Activated naive CD4-positive, alpha-beta T cell treated with anti-CD3 and anti-CD28 coated beads for 36 hours (primary cell): ENCODE measurements at regions of chr12 and their contacts with region 1.

Region 1: DNA sequence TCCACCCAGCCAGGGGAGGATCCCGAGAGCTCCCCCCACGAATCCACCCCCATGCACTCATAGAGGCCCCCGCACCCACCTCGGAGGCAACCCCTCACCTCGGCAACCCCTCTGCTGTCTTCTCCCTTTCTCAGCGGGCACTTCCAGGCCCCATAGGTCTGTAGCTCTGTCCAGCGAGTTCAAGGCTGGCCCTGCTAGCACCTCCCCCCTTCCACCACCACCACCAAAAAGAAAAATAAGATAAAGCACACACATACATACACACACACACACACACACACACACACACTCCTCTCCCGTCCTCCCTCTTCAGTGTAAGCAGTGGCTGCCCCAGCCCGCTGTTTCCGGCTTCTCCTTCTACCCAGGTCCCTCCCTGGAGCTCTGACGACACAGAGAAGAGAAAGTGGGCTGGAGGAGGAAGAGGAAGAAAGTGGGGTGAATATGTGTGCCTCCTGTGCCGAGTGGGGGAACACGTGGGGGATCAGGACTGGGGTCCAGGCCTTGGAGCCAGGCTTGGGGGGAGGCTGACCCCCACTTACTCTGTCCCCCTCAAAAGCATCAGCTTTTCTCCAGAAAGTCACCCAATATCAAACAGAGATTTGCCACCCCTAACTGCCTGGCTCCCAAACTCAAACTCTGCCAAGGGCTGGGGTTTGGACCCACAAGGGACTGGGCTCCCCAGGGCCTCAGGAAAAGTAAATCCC is at the start of gene STAT6:
- DNase-seq: peak; percentile 92
- H3K4me3 Mint-ChIP-seq: peak within 1 kb of the TSS; percentile 92
- H3K27ac Mint-ChIP-seq: peak within 1 kb of the TSS; percentile 94
- H3K4me1 Mint-ChIP-seq: peaks cover 45% of the 10 kb centered on the region
- H3K27me3 Mint-ChIP-seq: no peaks in the 10 kb centered on the region
- total RNA-seq, gene STAT6: 188 to 193 TPM

Region 2: DNA sequence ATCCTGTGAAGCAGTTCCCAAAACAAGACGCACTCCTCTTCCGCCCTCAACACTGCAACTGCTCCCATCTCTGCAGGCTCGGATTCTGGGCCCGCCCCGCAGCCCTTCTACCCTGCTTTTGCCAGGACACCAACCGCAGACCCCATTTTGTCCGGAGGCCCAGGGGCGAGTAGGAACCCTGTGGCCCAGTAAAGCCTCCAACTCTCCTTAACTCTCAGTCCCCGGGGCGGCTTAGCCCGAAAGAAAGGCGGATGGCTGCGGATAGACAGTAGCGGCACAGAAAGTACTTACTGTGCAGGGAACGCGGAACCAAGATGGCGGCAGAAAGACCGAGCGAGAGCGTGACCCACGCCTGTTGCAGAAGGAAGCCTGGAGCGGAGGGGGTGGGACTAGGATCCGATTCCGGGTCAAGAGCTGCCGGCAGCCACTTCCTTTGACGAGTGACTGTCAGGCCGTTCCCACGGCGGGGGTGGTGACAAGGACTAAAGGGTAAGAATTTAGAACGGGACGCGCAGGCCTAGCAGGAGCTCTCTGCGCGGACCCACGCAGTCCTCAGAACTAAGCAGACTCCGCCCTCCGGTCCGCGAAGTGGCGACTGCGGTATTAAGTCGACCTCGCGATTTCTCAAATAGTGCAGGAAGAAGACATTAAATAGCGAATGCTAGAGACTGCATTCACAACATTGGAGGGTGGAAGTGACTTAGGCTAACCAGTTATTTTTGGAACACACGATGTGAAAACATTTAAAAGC is 386.0 kb before region 1 on chr12 and contains the start of gene NACA:
- CTCF ChIA-PET with region 1: no interaction called
- intact Hi-C with region 1: loop called (anchors 1 kb)
- DNase-seq: peak; percentile 99
- H3K4me3 Mint-ChIP-seq: peak within 1 kb of the TSS; percentile 99
- H3K27ac Mint-ChIP-seq: peak within 1 kb of the TSS; percentile 99
- H3K4me1 Mint-ChIP-seq: peaks cover 46% of the 10 kb centered on the region
- H3K27me3 Mint-ChIP-seq: no peaks in the 10 kb centered on the region
- total RNA-seq, gene NACA: 1,279 to 1,321 TPM

Region 3: DNA sequence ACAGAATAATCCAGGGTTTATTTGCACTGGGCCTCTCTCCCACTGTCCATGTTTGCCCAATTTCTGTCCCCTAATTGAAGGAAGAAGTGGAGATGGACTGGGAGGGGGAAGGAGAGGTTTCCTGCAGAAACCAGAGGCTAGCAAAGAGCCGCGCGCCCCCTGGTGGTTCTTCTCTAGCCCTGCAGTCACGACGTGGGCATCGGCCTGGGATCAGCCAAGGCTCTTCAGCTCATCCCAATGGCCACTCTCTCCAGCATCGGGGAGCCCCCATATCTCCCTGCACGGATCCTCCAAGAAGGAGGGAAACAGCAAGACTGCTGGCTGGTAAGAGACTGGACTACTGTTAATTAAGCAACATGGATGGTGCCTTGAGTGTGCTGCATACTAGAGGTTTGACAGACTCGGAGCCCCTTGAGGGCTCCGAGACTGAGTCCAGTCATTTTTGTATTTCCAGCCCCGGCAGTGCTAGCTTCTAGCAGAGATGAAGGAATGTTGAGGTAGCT is 123.6 kb before region 1 on chr12:
- CTCF ChIA-PET with region 1: interaction called, 10 read pairs
- intact Hi-C with region 1: no loop called
- DNase-seq: peak; percentile 84
- H3K4me3 Mint-ChIP-seq: no peak overlapping the region
- H3K27ac Mint-ChIP-seq: no peak overlapping the region
- H3K4me1 Mint-ChIP-seq: peaks cover 12% of the 10 kb centered on the region
- H3K27me3 Mint-ChIP-seq: no peaks in the 10 kb centered on the region

Region 4: GRCh38 chr12:57031138-57031725 is 80.0 kb before region 1 on chr12:
- CTCF ChIA-PET with region 1: interaction called, 12 read pairs
- intact Hi-C with region 1: loop called (anchors 1 kb)
- DNase-seq: peak; percentile 64
- H3K4me3 Mint-ChIP-seq: peak overlapping the region; percentile 2
- H3K27ac Mint-ChIP-seq: peak overlapping the region; percentile 42
- H3K4me1 Mint-ChIP-seq: peaks cover 55% of the 10 kb centered on the region
- H3K27me3 Mint-ChIP-seq: no peaks in the 10 kb centered on the region

Region 5: DNA sequence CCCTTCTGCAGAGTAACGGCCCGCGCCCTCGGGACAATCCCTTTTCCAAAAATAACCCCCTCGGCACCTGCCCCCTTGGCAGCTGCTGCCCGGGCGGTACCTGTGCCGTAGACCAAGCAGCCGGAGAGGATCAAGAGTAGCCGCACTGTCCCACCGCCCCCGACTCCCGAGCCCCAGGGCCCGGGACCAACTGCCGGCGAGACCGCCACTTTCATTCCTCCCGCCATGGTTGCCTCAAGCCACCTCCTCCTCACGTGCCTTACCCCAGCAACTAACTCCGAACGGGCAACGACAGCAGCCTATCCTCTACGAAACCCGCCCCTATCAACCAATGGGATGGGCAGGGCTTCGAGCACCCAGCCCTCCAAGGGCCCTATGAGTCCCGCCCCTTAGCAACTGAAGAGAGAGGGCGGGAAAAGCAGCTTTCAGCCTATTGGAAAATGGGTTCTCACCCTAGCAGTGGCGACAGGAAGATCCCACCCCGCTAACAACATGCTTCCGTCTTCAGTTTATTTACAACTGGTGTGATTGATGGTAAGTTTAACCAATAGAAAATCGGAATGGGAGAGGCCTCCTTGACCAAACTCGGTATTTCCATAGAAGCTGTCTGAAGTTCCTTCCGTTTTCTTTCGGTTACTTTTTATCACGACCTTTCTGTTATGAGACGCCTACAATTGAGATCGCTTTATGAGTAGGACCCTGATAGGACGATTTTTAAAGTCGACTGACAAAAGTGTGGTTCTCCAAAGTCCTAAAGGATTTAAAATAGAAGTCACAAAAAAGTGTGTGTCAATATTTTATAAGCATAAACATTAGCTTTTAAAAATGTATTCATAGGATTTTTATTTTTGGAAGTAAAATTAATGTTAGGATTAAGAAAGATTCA is 32.4 kb before region 1 on chr12 and contains the start of gene NEMP1:
- CTCF ChIA-PET with region 1: interaction called, 109 read pairs
- intact Hi-C with region 1: loop called (anchors 1 kb)
- DNase-seq: peak; percentile 98
- H3K4me3 Mint-ChIP-seq: peak within 1 kb of the TSS; percentile 99
- H3K27ac Mint-ChIP-seq: peak within 1 kb of the TSS; percentile 98
- H3K4me1 Mint-ChIP-seq: peaks cover 37% of the 10 kb centered on the region
- H3K27me3 Mint-ChIP-seq: no peaks in the 10 kb centered on the region
- total RNA-seq, gene NEMP1: 71.3 to 72.2 TPM

Region 6: DNA sequence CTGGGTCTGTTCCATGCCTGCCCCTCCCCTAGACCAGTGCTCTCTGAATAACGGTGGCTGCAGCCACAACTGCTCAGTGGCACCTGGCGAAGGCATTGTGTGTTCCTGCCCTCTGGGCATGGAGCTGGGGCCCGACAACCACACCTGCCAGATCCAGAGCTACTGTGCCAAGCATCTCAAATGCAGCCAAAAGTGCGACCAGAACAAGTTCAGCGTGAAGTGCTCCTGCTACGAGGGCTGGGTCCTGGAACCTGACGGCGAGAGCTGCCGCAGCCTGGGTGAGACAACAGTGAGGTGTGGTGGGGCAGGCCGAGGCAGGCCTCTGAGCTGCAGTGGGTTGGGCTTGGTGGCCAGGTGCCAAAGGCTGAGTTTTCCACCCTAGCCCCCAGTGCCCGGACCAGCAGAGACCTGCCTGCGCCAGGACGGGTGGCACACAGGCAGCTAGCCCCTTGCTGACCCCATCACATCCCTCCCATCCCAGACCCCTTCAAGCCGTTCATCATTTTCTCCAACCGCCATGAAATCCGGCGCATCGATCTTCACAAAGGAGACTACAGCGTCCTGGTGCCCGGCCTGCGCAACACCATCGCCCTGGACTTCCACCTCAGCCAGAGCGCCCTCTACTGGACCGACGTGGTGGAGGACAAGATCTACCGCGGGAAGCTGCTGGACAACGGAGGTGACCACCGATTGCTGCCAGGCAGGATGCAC is 64.4 kb after region 1 on chr12:
- CTCF ChIA-PET with region 1: interaction called, 13 read pairs
- intact Hi-C with region 1: no loop called
- DNase-seq: peak; percentile 70
- H3K4me3 Mint-ChIP-seq: peak overlapping the region; percentile 6
- H3K27ac Mint-ChIP-seq: no peak overlapping the region
- H3K4me1 Mint-ChIP-seq: no peaks in the 10 kb centered on the region
- H3K27me3 Mint-ChIP-seq: no peaks in the 10 kb centered on the region